Posterior cingulate gyrus (tissue), 11 donors: ENCODE measurements at regions of chr4 and their contacts with region 1.

Region 1: DNA sequence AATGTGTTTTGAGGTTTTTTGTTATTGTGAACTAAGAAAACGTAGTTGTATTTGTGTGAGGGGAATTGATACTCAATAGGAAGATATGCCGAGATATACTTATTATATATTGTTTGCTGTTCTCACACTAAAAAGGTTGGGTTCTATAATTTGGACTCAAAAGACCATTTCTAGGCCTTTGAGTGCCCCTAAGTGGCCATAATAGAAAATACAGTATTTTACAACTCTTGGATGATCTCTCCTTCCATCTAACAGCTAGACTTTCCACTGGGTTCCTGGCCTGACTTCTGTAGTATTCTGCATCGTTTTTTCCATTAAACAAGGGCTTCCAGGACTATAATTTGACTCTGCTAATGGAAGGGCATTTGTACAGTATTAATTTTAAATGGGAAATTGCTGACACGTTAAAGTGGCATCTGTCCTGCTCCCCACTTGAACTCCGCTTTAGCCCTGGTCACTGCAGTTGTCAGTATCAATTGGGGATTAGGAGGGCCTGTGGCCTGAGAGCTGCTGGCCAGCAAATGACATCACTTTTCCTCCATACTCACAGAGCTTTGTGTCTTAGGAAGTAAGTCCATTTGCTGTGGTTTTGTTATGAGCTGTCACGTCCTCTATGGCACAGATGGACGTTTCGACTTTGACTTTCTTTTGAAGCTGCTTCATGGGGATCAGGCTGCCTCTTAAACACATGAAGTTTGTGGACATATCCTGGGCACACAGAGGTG is 176.9 kb downstream of the SLIT2 start:
- DNase-seq: no peak

Region 2: DNA sequence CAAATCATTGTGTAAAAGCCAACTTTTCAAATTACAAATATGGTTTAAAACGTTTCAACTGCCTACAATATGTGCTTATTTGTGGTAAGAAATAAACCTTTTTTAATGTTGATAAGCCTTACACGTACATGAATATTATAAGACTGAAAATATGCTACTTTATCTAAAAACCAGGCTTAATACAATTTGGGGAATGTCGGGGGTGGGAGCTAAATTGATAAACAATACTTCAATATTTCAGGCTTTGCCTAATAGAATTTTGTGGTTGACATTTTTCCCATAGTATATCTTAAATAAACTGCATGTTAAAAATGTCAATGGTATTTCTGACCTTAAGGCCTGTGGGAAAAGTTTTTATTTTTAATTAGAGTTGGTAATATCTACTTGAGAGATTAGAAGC is 246.7 kb before region 1 on chr4:
- intact Hi-C with region 1: no loop called
- DNase-seq: no peak

Region 3: DNA sequence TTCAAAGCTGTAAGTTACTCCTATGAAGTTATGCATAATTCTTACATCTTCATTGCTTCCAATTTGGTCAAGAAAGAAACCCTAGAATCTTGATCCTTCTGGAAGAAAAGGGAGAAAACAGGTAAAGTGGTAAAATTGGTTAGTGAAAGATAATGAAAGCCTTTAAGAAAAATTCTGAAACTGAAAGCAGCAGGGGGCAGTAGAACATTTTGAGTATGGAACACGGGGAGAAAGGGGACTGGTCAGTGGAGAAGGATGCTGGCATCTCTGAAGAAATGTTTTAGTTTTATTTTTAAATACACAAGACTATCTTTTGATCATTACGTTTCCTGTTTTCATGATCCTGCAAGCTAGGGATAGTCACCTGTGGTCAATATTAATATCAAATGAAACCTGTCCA is 122.6 kb before region 1 on chr4:
- intact Hi-C with region 1: loop called (anchors 1 kb)
- DNase-seq: peak in 1 of 10 donors; percentile 40